GM12878 (cell line): ENCODE measurements at regions of chr14 and their contacts with region 1.

Region 1: DNA sequence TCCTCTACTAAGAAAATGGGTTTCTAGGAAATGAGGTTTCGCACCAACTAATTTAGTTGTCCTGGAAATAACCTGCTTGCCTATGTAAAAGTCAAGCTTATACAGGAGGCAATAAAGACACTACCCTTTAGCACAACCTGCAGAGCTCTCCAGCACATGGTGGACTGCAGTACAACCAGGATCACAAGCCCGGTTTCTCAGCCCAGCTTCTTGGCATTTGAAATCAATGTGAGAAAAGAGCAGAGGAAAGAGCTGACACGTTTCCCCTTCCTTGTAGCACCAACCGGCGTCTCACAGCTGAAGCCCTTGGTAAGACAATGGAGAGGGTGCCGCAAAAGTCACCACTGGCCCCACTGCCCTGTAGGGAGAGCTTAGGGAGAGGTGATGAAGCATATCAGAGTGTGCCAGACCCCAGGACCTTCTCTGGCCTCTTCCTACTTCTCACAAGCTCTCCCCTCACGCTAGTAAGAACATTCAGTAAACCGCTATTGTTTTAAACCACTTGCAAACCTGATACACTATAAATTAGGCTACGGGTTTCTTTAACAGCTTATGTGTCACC is 8.6 kb downstream of the SPTLC2 start:
- DNase-seq: no peak
- ATAC-seq: peak; percentile 77
- H3K4me3 ChIP-seq: 0 out of 2 replicates have a peak overlapping the region, but pooled peaks have one; percentile 31
- H3K27ac ChIP-seq: peak overlapping the region; percentile 68
- H3K4me1 ChIP-seq: peaks cover 18% of the 10 kb centered on the region
- H3K27me3 ChIP-seq: no peaks in the 10 kb centered on the region
- CTCF ChIP-seq: no peak
- EP300 ChIP-seq: no peak
- POLR2A ChIP-seq: no peak
- RAD21 ChIP-seq: no peak

Region 2: GRCh38 chr14:77439861-77440260 is 168.0 kb before region 1 on chr14:
- CTCF ChIA-PET with region 1: no interaction called
- POLR2A ChIA-PET with region 1: no interaction called
- RAD21 ChIA-PET with region 1: no interaction called
- SMC1A ChIA-PET with region 1: no interaction called
- in situ Hi-C with region 1: no loop called
- intact Hi-C with region 1: no loop called
- DNase-seq: no peak
- ATAC-seq: no peak
- H3K4me3 ChIP-seq: no peak overlapping the region
- H3K27ac ChIP-seq: no peak overlapping the region
- H3K4me1 ChIP-seq: no peaks in the 10 kb centered on the region
- H3K27me3 ChIP-seq: no peaks in the 10 kb centered on the region
- CTCF ChIP-seq: no peak
- EP300 ChIP-seq: no peak
- POLR2A ChIP-seq: no peak
- RAD21 ChIP-seq: no peak

Region 3: GRCh38 chr14:77580964-77581505 is 26.8 kb before region 1 on chr14:
- CTCF ChIA-PET with region 1: interaction called, 5 read pairs
- POLR2A ChIA-PET with region 1: interaction called, 4 read pairs
- RAD21 ChIA-PET with region 1: no interaction called
- SMC1A ChIA-PET with region 1: interaction called, 33 read pairs
- in situ Hi-C with region 1: no loop called
- intact Hi-C with region 1: no loop called
- DNase-seq: peak; percentile 66
- ATAC-seq: peak; percentile 99
- H3K4me3 ChIP-seq: no peak overlapping the region
- H3K27ac ChIP-seq: peak overlapping the region; percentile 45; the same call in 1 of the 2 replicates
- H3K4me1 ChIP-seq: peaks cover 4% of the 10 kb centered on the region
- H3K27me3 ChIP-seq: no peaks in the 10 kb centered on the region
- CTCF ChIP-seq: no peak
- EP300 ChIP-seq: peak; percentile 41 to 45; a peak in 2 of 4 replicates
- POLR2A ChIP-seq: no peak
- RAD21 ChIP-seq: no peak